ENCODE measurements at regions of chr3 and their contacts with region 1.

Region 1: DNA sequence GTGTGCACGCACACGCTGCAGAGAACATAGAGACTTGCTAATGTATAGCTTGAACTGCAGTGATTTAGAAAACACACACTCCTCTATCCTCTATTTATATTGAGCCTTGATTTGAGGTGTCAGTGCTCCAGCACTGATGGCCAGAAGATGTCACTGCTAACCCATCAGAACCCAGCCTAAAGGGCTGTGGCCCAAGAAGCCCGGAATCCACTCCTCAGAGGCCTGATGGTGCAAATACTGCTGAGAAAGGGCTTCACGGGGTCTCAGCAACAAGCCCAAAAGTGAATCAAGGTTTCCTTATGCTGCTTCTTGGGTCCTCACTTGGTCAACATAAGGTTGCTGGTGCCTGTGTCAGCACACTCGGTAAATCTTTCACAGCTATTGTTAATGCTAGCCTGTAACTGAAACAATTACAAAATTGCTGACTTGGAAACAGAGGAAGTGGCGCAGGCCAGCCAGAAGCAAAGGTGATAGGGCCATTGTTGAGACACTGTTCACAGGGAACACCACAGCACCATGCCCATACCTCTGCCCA is 60.3 kb downstream of the HEG1 start:
- DNase-seq: peak in 8 of 9 experiments; percentile 6 to 80 (median 52)
- ATAC-seq: peak; percentile 92
- H3K4me3 ChIP-seq: no peak overlapping the region
- H3K4me3 Mint-ChIP-seq: no peak overlapping the region
- H3K27ac ChIP-seq: peak overlapping the region in 1 of 2 experiments; percentile 38
- H3K27ac Mint-ChIP-seq: no peak overlapping the region
- H3K4me1 ChIP-seq: no peaks in the 10 kb centered on the region
- H3K4me1 Mint-ChIP-seq: peaks cover 4% of the 10 kb centered on the region
- H3K27me3 ChIP-seq: no peaks in the 10 kb centered on the region
- H3K27me3 Mint-ChIP-seq: no peaks in the 10 kb centered on the region
- CTCF ChIP-seq: peak; percentile 72

Region 2: GRCh38 chr3:125011941-125012340 is 16.4 kb after region 1 on chr3:
- CTCF ChIA-PET with region 1: interaction called, 13 read pairs
- POLR2A ChIA-PET with region 1: no interaction called
- intact Hi-C with region 1: no loop called
- DNase-seq: no peak
- ATAC-seq: no peak
- H3K4me3 ChIP-seq: no peak overlapping the region
- H3K4me3 Mint-ChIP-seq: no peak overlapping the region
- H3K27ac ChIP-seq: no peak overlapping the region
- H3K27ac Mint-ChIP-seq: no peak overlapping the region
- H3K4me1 ChIP-seq: peaks cover 11% of the 10 kb centered on the region
- H3K4me1 Mint-ChIP-seq: peaks cover 19% of the 10 kb centered on the region
- H3K27me3 ChIP-seq: no peaks in the 10 kb centered on the region
- H3K27me3 Mint-ChIP-seq: no peaks in the 10 kb centered on the region
- CTCF ChIP-seq: no peak

Region 3: GRCh38 chr3:125141596-125142419 is 146.3 kb after region 1 on chr3:
- CTCF ChIA-PET with region 1: interaction called, 5 read pairs
- POLR2A ChIA-PET with region 1: no interaction called
- intact Hi-C with region 1: loop called (anchors 5 kb)
- DNase-seq: peak; percentile 29 to 89 (median 68)
- ATAC-seq: peak; percentile 88
- H3K4me3 ChIP-seq: peak overlapping the region; percentile 41 to 59
- H3K4me3 Mint-ChIP-seq: peak overlapping the region; percentile 75
- H3K27ac ChIP-seq: peak overlapping the region; percentile 12 to 59
- H3K27ac Mint-ChIP-seq: peak overlapping the region; percentile 87
- H3K4me1 ChIP-seq: peaks cover 19% of the 10 kb centered on the region
- H3K4me1 Mint-ChIP-seq: peaks cover 35% of the 10 kb centered on the region
- H3K27me3 ChIP-seq: no peaks in the 10 kb centered on the region
- H3K27me3 Mint-ChIP-seq: no peaks in the 10 kb centered on the region
- CTCF ChIP-seq: peak; percentile 40

Region 4: GRCh38 chr3:125202197-125202596 is 206.7 kb after region 1 on chr3:
- CTCF ChIA-PET with region 1: interaction called, 12 read pairs
- POLR2A ChIA-PET with region 1: no interaction called
- intact Hi-C with region 1: loop called (anchors 1 to 5 kb)
- DNase-seq: peak in 2 of 9 experiments; percentile 30 to 53
- ATAC-seq: no peak
- H3K4me3 ChIP-seq: no peak overlapping the region
- H3K4me3 Mint-ChIP-seq: no peak overlapping the region
- H3K27ac ChIP-seq: no peak overlapping the region
- H3K27ac Mint-ChIP-seq: no peak overlapping the region
- H3K4me1 ChIP-seq: no peaks in the 10 kb centered on the region
- H3K4me1 Mint-ChIP-seq: no peaks in the 10 kb centered on the region
- H3K27me3 ChIP-seq: no peaks in the 10 kb centered on the region
- H3K27me3 Mint-ChIP-seq: peaks cover 6% of the 10 kb centered on the region
- CTCF ChIP-seq: no peak

Region 5: DNA sequence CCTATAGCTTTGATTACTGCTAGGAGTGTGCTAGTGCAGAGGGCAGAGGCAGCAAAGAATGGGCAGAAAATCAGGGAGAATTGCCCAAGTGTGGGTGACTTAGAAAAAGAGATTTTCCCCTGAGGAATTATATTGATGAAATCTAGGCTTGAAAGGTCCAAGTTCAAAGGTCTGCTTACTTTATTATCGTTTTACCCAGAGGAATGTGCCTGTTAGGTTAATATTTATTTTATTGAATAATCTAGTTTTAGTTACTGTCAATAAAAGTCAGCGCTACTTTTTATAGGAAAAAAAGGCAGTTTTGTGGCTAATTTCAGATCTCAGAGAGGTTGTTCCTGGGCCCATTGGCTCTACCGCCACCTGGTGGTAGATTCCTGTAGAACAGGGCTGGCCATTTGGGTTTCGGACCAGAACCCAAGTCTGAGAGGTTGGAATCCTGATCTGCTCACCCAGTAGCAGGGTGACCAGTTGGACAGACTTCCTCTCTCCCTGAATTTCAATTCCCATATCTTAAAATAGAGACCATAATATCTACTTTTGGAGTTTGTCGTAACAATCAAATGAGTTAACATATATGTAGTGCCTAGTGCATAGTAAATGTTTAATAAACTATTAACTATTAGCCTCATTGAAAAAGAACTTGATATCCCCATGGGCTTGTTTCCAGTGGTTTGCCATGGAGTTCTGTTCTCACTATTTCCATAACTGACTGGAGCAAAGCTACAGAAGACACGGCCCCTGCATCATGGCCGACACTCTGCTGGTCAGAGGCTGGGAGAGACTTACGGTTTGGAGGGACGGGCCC is 442.3 kb after region 1 on chr3:
- CTCF ChIA-PET with region 1: interaction called, 66 read pairs
- POLR2A ChIA-PET with region 1: interaction called, 3 read pairs
- intact Hi-C with region 1: loop called (anchors 1 kb)
- DNase-seq: peak; percentile 31 to 77 (median 64)
- ATAC-seq: peak; percentile 46
- H3K4me3 ChIP-seq: no peak overlapping the region
- H3K4me3 Mint-ChIP-seq: no peak overlapping the region
- H3K27ac ChIP-seq: no peak overlapping the region
- H3K27ac Mint-ChIP-seq: no peak overlapping the region
- H3K4me1 ChIP-seq: no peaks in the 10 kb centered on the region
- H3K4me1 Mint-ChIP-seq: no peaks in the 10 kb centered on the region
- H3K27me3 ChIP-seq: no peaks in the 10 kb centered on the region
- H3K27me3 Mint-ChIP-seq: no peaks in the 10 kb centered on the region
- CTCF ChIP-seq: peak; percentile 99

Region 6: DNA sequence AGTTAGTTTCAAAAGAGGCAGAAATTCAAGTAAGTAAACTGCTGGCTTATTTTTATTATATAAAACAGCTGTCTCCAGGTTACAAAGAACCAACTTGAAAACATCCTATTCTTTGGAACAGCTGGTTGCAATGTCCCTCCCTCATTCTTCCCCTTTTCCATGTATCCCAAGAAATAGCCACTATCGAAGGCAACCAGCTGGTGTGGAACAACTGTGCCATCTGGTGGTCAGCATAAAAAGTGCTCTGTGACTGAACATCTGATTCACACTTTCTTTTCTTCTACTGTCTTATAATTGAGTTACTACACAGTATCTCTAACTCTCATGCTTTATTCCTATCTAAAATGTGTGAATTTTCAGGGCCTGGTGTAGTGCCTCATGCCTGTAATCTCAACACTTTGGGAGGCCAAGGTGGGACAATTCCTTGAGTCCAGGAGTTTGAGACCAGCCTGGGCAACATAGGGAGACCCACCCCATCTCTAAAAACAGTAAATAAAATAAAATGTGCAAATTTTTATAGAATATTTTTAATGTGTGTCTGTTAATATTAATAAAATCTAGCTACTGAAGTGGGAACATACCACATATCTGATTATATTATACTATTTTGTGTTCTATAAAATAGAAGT is 590.2 kb after region 1 on chr3:
- CTCF ChIA-PET with region 1: interaction called, 3 read pairs
- POLR2A ChIA-PET with region 1: no interaction called
- intact Hi-C with region 1: loop called (anchors 1 to 2 kb)
- DNase-seq: peak in 6 of 9 experiments; percentile 24 to 68 (median 40)
- ATAC-seq: peak; percentile 74
- H3K4me3 ChIP-seq: no peak overlapping the region
- H3K4me3 Mint-ChIP-seq: no peak overlapping the region
- H3K27ac ChIP-seq: no peak overlapping the region
- H3K27ac Mint-ChIP-seq: no peak overlapping the region
- H3K4me1 ChIP-seq: peaks cover 5% of the 10 kb centered on the region
- H3K4me1 Mint-ChIP-seq: peaks cover 23% of the 10 kb centered on the region
- H3K27me3 ChIP-seq: no peaks in the 10 kb centered on the region
- H3K27me3 Mint-ChIP-seq: no peaks in the 10 kb centered on the region
- CTCF ChIP-seq: peak; percentile 87

Measured in CD8-positive, alpha-beta T cell (primary cell).